Breast epithelium (tissue), 4 donors: ENCODE measurements at regions of chr5 and their contacts with region 1.

Region 1: DNA sequence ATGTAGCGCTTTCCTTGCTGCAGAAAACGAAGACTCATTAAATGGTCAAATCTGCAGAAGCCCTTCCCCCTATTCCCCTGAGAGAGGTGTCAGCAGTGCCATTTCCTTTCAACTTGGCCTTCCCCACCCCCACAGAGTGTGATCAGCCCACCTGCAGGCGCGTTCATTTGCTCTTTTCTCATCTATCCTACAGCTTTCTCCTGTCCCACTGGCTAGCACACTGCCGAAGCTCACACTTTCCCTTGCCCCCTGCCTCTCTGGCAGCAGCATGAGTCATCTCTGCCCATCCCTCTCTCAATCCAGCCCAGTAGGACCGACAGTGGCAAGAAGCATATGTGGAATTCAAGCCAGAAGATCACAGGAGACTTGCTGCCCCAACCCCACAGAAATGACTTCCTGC is 213.8 kb downstream of the FAM114A2 start:
- DNase-seq: no peak
- H3K4me3 ChIP-seq: no peak overlapping the region
- H3K27ac ChIP-seq: no peak overlapping the region
- H3K4me1 ChIP-seq: no peaks in the 10 kb centered on the region
- H3K27me3 ChIP-seq: no peaks in the 10 kb centered on the region
- CTCF ChIP-seq: no peak
- POLR2A ChIP-seq: no peak

Region 2: GRCh38 chr5:153809166-153809565 is 15.7 kb before region 1 on chr5:
- intact Hi-C with region 1: loop called (anchors 1 kb)
- DNase-seq: no peak
- H3K4me3 ChIP-seq: no peak overlapping the region
- H3K27ac ChIP-seq: no peak overlapping the region
- H3K4me1 ChIP-seq: no peaks in the 10 kb centered on the region
- H3K27me3 ChIP-seq: no peaks in the 10 kb centered on the region
- CTCF ChIP-seq: no peak
- POLR2A ChIP-seq: no peak

Region 3: GRCh38 chr5:153865899-153866575 is 41.1 kb after region 1 on chr5:
- intact Hi-C with region 1: no loop called
- DNase-seq: no peak
- H3K4me3 ChIP-seq: no peak overlapping the region
- H3K27ac ChIP-seq: no peak overlapping the region
- H3K4me1 ChIP-seq: no peaks in the 10 kb centered on the region
- H3K27me3 ChIP-seq: no peaks in the 10 kb centered on the region
- CTCF ChIP-seq: no peak
- POLR2A ChIP-seq: no peak

Region 4: DNA sequence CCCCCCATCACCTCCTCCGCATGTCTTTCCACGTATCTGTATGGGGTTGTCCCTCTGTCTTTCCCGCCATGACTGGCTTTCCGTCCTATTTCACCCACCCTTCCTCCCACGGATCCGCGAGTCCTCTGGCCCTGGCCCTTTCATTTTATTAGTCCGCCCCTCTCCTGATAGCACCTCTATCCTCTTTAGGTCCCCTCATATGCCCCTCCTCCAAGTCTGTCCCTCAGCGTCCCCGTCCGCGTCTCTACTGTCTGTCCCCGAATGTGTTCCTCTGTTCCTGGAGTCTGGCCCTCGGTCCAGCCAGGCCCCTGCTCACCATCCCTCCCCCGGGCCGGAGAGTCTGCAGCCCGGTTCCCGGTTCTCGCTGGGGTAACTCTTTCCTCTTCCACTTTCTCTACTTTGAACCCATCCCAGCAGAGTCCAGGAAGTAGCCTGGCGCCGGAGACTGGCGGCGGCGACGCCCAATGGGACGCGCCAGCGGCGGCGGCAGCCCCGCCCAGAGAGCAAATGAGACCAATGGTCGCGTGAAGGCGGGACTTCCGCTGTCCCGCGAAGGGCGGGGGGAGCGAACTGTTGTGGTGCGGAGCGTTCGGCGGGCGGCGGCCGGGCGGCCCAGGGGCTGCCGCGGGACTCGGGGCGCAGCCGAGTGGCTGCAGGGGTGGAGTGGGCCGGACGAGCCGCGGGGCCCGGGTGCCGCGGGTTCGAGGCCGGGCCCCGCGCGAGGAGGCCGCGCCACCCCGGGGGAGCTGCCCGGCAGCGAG is 620.7 kb after region 1 on chr5 and contains the start of gene SAP30L:
- intact Hi-C with region 1: no loop called
- DNase-seq: peak; percentile 91 to 92
- H3K4me3 ChIP-seq: peak within 1 kb of the TSS; percentile 97 to 98 (median 98)
- H3K27ac ChIP-seq: peak within 1 kb of the TSS; percentile 77 to 87
- H3K4me1 ChIP-seq: peaks cover 0 to 7% of the 10 kb centered on the region in 2 donors
- H3K27me3 ChIP-seq: no peaks in the 10 kb centered on the region
- CTCF ChIP-seq: peak in 1 of 3 donors; percentile 7
- POLR2A ChIP-seq: peak; percentile 17
- total RNA-seq, gene SAP30L: 29.7 to 54.4 (median 43.7) TPM

Region 5: DNA sequence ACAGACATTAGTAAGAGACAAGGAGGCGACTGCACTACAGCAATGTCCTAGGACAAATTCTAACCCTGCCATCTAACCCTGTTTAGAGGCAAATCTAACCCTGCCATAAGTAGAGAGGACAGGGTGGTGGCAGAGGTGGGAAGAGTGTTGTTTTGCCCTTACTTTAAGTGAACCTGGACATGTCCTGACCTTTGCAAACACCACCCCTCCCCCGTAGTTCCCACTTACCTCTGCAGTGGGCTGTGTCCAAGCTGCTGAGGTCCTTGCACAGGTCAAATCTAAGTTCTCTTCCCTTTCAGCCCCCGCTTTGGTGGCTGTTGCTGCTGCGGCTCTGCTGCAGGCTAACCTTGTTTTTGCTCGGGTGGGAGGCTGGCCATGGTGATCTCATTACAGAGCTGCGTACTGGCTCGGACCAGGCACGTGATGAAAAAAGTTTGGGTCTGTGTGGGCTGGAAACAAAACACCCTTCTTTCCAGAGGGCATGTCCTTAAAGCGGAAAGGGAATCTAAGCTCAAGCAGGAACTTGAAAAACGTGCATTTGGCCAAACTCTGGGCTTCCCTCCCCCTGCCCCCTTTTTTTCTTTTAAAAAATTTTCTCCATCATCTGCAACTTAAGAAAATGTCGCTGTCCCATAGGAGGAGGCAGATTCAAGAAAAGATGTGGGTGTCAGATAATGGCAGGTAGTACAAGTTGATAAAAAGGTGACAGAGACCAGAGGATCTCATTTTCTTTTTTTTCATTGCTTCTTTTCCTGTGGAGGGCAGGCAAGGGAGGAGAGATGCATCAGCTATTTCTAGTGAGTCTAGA is 1025.5 kb after region 1 on chr5 and contains the start of gene FAXDC2:
- intact Hi-C with region 1: no loop called
- DNase-seq: peak; percentile 63 to 77
- H3K4me3 ChIP-seq: peak within 1 kb of the TSS; percentile 62 to 66 (median 66)
- H3K27ac ChIP-seq: peak within 1 kb of the TSS; percentile 85 to 86
- H3K4me1 ChIP-seq: peaks cover 4% of the 10 kb centered on the region in 2 donors
- H3K27me3 ChIP-seq: no peaks in the 10 kb centered on the region
- CTCF ChIP-seq: no peak
- POLR2A ChIP-seq: no peak
- total RNA-seq, gene FAXDC2: 43.9 to 117 (median 52.5) TPM